PC-9 (cell line): ENCODE measurements at regions of chr3 and their contacts with region 1.

Region 1: DNA sequence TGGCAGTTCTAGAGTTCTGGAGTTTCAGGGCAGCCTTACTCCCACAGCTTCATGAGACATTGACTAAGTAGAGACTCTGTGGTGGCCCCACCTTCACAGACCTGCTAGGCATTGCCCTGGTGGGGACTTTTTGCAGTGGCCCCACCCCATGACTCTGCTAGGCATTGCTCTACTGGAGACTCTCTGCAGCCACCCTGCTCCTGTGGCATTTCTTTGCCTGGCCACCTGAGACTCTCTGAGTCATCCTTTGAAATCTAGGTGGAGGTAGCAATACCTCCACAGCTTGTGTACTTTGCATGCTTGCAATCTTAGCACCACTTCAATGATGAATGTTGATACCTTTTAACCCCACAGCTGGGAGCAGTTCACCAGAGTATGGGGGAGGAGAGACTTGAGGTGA is 40.6 kb upstream of the DHX36 start:
- DNase-seq: peak; percentile 64 to 70
- H3K4me3 ChIP-seq: no peak overlapping the region
- H3K27ac ChIP-seq: no peak overlapping the region
- H3K4me1 ChIP-seq: peaks cover 18% of the 10 kb centered on the region
- H3K27me3 ChIP-seq: no peaks in the 10 kb centered on the region
- CTCF ChIP-seq: no peak

Region 2: GRCh38 chr3:154323891-154324738 is 40.7 kb before region 1 on chr3 and contains the start of gene DHX36:
- CTCF ChIA-PET with region 1: interaction called, 20 read pairs
- POLR2A ChIA-PET with region 1: no interaction called
- intact Hi-C with region 1: no loop called
- DNase-seq: peak; percentile 73 to 79
- H3K4me3 ChIP-seq: peak within 1 kb of the TSS; percentile 75
- H3K27ac ChIP-seq: peak within 1 kb of the TSS; percentile 71
- H3K4me1 ChIP-seq: peaks cover 28% of the 10 kb centered on the region
- H3K27me3 ChIP-seq: no peaks in the 10 kb centered on the region
- CTCF ChIP-seq: no peak; the same call in 1 of the 2 replicates
- total RNA-seq, gene DHX36: 64.2 and 87.2 TPM in 2 replicates